B cell (primary cell): ENCODE measurements at regions of chr6 and their contacts with region 1.

Region 1: GRCh38 chr6:18155150-18155863 is at the start of gene KDM1B:
- DNase-seq: peak; percentile 99
- ATAC-seq: peak; percentile 92
- H3K4me3 ChIP-seq: peak within 1 kb of the TSS; percentile 75 to 99 (median 89)
- H3K4me3 Mint-ChIP-seq: peak within 1 kb of the TSS; percentile 99
- H3K27ac ChIP-seq: peak within 1 kb of the TSS; percentile 83 to 87
- H3K27ac Mint-ChIP-seq: peak within 1 kb of the TSS; percentile 98
- H3K4me1 ChIP-seq: peaks cover 25 to 29% of the 10 kb centered on the region in 2 donors
- H3K4me1 Mint-ChIP-seq: peaks cover 24% of the 10 kb centered on the region
- H3K27me3 ChIP-seq: no peaks in the 10 kb centered on the region
- H3K27me3 Mint-ChIP-seq: no peaks in the 10 kb centered on the region
- CTCF ChIP-seq: no peak
- total RNA-seq, gene KDM1B: 10.0 and 10.9 TPM in 2 replicates

Region 2: GRCh38 chr6:17599885-17600526 is 555.3 kb before region 1 on chr6 and contains the start of gene FAM8A1:
- CTCF ChIA-PET with region 1: no interaction called
- POLR2A ChIA-PET with region 1: interaction called, 5 read pairs
- intact Hi-C with region 1: loop called (anchors 1 kb)
- DNase-seq: peak; percentile 93
- ATAC-seq: peak; percentile 90
- H3K4me3 ChIP-seq: peak within 1 kb of the TSS; percentile 51 to 84 (median 79)
- H3K4me3 Mint-ChIP-seq: peak within 1 kb of the TSS; percentile 91
- H3K27ac ChIP-seq: peak within 1 kb of the TSS; percentile 54 to 74
- H3K27ac Mint-ChIP-seq: peak within 1 kb of the TSS; percentile 86
- H3K4me1 ChIP-seq: peaks cover 13% of the 10 kb centered on the region in 2 donors
- H3K4me1 Mint-ChIP-seq: peaks cover 10% of the 10 kb centered on the region
- H3K27me3 ChIP-seq: no peaks in the 10 kb centered on the region
- H3K27me3 Mint-ChIP-seq: no peaks in the 10 kb centered on the region
- CTCF ChIP-seq: peak; percentile 41
- total RNA-seq, gene FAM8A1: 5.2 and 7.0 TPM in 2 replicates

Region 3: DNA sequence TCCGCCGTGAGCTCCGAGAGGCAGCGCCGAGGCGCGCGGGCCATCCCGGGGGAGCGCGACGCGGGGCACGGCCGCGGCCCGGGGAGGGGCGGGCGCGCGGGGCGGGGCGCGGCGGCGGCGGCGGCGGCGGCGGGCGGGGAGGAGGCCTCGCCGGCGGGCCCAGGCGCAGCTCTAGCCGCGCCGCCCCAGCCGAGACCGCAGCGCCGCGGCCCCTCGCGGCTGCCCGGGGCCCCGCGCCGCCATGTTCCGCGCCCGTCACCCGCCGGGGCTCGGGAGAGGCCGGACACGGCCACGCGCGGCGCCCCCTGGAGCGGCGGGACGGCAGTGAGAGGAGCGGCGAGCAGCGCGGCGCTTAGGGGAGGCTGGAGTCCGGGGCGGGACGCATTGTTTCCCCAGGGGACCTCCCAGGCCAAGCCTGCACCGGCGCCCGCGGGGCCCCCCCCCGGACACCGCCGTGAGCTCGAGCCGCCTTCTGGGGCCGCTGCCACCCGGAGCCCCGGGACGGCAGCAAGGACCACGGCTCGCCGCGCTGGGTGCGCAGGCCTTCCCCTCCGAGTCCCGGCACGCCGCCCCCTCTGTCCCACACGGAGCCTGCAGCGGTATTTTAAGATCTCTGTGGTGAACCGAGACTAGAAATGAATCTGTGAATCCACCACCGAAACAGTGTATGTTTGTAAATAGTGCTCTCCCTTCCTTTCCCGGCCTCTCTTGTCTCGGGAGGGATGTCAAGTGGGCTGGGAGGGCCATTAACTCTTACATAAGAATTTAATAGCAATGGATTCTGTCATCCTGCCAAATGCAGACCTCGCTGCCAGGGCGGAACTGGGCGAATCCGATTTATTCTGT is 167.5 kb before region 1 on chr6 and contains the start of gene KIF13A:
- CTCF ChIA-PET with region 1: no interaction called
- POLR2A ChIA-PET with region 1: no interaction called
- intact Hi-C with region 1: loop called (anchors 1 kb)
- DNase-seq: peak; percentile 81
- ATAC-seq: peak; percentile 74
- H3K4me3 ChIP-seq: peak within 1 kb of the TSS; percentile 41 to 85 (median 63)
- H3K4me3 Mint-ChIP-seq: peak within 1 kb of the TSS; percentile 97
- H3K27ac ChIP-seq: peak within 1 kb of the TSS in 1 of 2 donors; percentile 58
- H3K27ac Mint-ChIP-seq: peak within 1 kb of the TSS; percentile 92
- H3K4me1 ChIP-seq: peaks cover 19 to 23% of the 10 kb centered on the region in 2 donors
- H3K4me1 Mint-ChIP-seq: peaks cover 40% of the 10 kb centered on the region
- H3K27me3 ChIP-seq: peaks cover 0 to 13% (median 5%) of the 10 kb centered on the region in 4 experiments
- H3K27me3 Mint-ChIP-seq: no peaks in the 10 kb centered on the region
- CTCF ChIP-seq: peak; percentile 35
- total RNA-seq, gene KIF13A: 21.3 and 23.4 TPM in 2 replicates

Region 4: DNA sequence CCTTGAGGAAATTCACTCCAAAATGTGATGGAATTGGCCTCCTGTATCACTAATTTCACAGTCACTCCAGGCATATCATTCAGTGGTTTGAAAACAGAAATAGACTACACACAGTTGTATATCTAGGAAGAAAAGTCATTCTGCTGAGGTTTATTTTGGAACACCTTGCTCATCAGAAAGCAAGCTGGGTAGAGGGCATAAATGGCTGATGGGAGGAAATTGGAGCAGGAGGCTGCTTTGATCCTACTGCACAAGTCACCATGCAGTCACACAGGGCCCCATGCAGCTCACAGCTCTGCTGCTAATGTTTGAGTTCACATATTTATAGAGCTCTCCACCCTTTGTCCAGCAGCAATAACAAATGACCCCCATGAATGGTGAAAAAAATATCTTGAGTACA is 45.1 kb before region 1 on chr6:
- CTCF ChIA-PET with region 1: no interaction called
- POLR2A ChIA-PET with region 1: no interaction called
- intact Hi-C with region 1: no loop called
- DNase-seq: no peak
- ATAC-seq: no peak
- H3K4me3 ChIP-seq: no peak overlapping the region
- H3K4me3 Mint-ChIP-seq: no peak overlapping the region
- H3K27ac ChIP-seq: no peak overlapping the region
- H3K27ac Mint-ChIP-seq: no peak overlapping the region
- H3K4me1 ChIP-seq: no peaks in the 10 kb centered on the region
- H3K4me1 Mint-ChIP-seq: no peaks in the 10 kb centered on the region
- H3K27me3 ChIP-seq: no peaks in the 10 kb centered on the region
- H3K27me3 Mint-ChIP-seq: peaks cover 4% of the 10 kb centered on the region
- CTCF ChIP-seq: no peak

Region 5: DNA sequence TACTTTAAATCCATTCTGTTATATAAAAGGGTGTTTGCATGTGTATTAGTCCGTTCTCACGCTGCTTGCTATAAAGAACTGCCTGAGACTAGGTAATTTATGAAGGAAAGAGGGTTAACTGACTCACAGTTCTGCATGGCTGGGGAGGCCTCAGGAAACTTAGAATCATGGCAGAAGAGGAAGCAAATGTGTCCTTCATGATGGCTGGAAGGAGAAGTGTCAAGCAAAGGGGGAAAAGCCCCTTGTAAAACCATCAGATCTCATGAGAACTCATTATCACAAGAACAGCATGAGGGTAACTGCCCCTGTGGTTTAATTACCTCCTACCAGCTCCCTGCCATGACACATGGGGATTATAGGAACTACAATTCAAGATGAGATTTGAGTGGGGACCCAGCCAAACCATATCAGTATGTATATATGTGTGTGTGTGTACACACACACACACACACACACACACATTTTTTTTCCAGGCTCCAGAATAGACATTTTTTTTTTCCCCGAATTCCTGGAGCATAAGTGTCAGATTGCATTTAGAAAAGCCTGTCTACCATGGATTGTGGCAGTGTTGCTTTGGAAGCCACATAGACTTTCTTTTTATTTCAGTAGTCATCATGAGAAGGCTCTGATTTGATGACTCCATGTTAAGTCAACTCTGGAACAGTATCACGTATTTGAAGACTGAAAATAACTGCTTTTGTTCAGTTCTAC is 31.4 kb after region 1 on chr6:
- CTCF ChIA-PET with region 1: no interaction called
- POLR2A ChIA-PET with region 1: no interaction called
- intact Hi-C with region 1: no loop called
- DNase-seq: peak; percentile 23
- ATAC-seq: peak; percentile 28
- H3K4me3 ChIP-seq: no peak overlapping the region
- H3K4me3 Mint-ChIP-seq: no peak overlapping the region
- H3K27ac ChIP-seq: peak overlapping the region in 1 of 2 donors; percentile 42
- H3K27ac Mint-ChIP-seq: peak overlapping the region; percentile 42
- H3K4me1 ChIP-seq: peaks cover 12% of the 10 kb centered on the region in 2 donors
- H3K4me1 Mint-ChIP-seq: peaks cover 18% of the 10 kb centered on the region
- H3K27me3 ChIP-seq: no peaks in the 10 kb centered on the region
- H3K27me3 Mint-ChIP-seq: no peaks in the 10 kb centered on the region
- CTCF ChIP-seq: no peak

Region 6: DNA sequence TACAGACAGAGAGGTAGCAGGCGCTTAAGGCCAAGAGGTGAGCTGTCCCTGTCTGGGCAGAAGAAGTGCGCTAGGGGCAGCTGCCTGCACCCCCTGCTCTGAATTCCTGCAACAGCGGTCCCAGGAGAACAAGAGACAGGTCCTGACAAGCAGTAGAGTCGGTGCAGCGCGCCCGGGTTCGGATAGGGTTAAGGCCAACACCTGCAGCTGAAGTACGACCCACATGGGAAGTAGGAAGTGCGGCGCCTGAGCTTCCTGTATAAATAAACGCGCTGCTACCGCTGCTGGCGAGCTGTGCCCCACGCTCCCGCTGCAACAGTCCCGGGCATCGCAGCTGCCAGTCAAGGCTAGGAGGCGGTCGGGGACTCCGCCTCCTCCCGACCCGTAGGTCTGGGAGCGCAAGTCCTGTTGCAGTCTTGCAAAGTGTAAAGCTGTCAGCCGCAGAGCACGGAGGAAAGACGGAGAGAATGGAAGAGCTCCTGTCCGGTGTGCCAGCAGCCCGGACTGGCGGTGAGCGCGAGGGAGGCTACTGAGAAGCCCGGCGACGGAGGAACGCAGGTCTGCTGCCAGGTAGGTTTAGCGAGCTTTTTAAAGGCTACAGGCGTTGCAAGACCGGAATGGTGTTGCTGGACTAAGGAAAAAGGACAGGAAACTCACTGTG is 231.9 kb after region 1 on chr6 and contains the start of gene RNF144B:
- CTCF ChIA-PET with region 1: no interaction called
- POLR2A ChIA-PET with region 1: no interaction called
- intact Hi-C with region 1: loop called (anchors 5 kb)
- DNase-seq: peak; percentile 84
- ATAC-seq: peak; percentile 95
- H3K4me3 ChIP-seq: peak within 1 kb of the TSS; percentile 72 to 100 (median 92)
- H3K4me3 Mint-ChIP-seq: peak within 1 kb of the TSS; percentile 99
- H3K27ac ChIP-seq: peak within 1 kb of the TSS; percentile 60 to 77
- H3K27ac Mint-ChIP-seq: peak within 1 kb of the TSS; percentile 95
- H3K4me1 ChIP-seq: peaks cover 32 to 35% of the 10 kb centered on the region in 2 donors
- H3K4me1 Mint-ChIP-seq: peaks cover 56% of the 10 kb centered on the region
- H3K27me3 ChIP-seq: no peaks in the 10 kb centered on the region
- H3K27me3 Mint-ChIP-seq: no peaks in the 10 kb centered on the region
- CTCF ChIP-seq: no peak
- total RNA-seq, gene RNF144B: 17.0 and 21.4 TPM in 2 replicates

Region 7: GRCh38 chr6:18400831-18401446 is 245.6 kb after region 1 on chr6:
- CTCF ChIA-PET with region 1: no interaction called
- POLR2A ChIA-PET with region 1: no interaction called
- intact Hi-C with region 1: loop called (anchors 1 kb)
- DNase-seq: peak; percentile 73
- ATAC-seq: peak; percentile 90
- H3K4me3 ChIP-seq: peak overlapping the region in 2 of 5 experiments; percentile 7 to 11
- H3K4me3 Mint-ChIP-seq: peak overlapping the region; percentile 70
- H3K27ac ChIP-seq: peak overlapping the region; percentile 54 to 84
- H3K27ac Mint-ChIP-seq: peak overlapping the region; percentile 90
- H3K4me1 ChIP-seq: peaks cover 23 to 39% of the 10 kb centered on the region in 2 donors
- H3K4me1 Mint-ChIP-seq: peaks cover 40% of the 10 kb centered on the region
- H3K27me3 ChIP-seq: no peaks in the 10 kb centered on the region
- H3K27me3 Mint-ChIP-seq: no peaks in the 10 kb centered on the region
- CTCF ChIP-seq: no peak

Region 8: GRCh38 chr6:18415671-18416340 is 260.5 kb after region 1 on chr6:
- CTCF ChIA-PET with region 1: no interaction called
- POLR2A ChIA-PET with region 1: no interaction called
- intact Hi-C with region 1: no loop called
- DNase-seq: no peak
- ATAC-seq: no peak
- H3K4me3 ChIP-seq: no peak overlapping the region
- H3K4me3 Mint-ChIP-seq: no peak overlapping the region
- H3K27ac ChIP-seq: no peak overlapping the region
- H3K27ac Mint-ChIP-seq: no peak overlapping the region
- H3K4me1 ChIP-seq: peaks cover 17 to 18% of the 10 kb centered on the region in 2 donors
- H3K4me1 Mint-ChIP-seq: peaks cover 42% of the 10 kb centered on the region
- H3K27me3 ChIP-seq: no peaks in the 10 kb centered on the region
- H3K27me3 Mint-ChIP-seq: no peaks in the 10 kb centered on the region
- CTCF ChIP-seq: no peak

Region 9: GRCh38 chr6:19059102-19059501 is 903.8 kb after region 1 on chr6:
- CTCF ChIA-PET with region 1: no interaction called
- POLR2A ChIA-PET with region 1: no interaction called
- intact Hi-C with region 1: no loop called
- DNase-seq: no peak
- ATAC-seq: no peak
- H3K4me3 ChIP-seq: no peak overlapping the region
- H3K4me3 Mint-ChIP-seq: no peak overlapping the region
- H3K27ac ChIP-seq: no peak overlapping the region
- H3K27ac Mint-ChIP-seq: no peak overlapping the region
- H3K4me1 ChIP-seq: no peaks in the 10 kb centered on the region
- H3K4me1 Mint-ChIP-seq: no peaks in the 10 kb centered on the region
- H3K27me3 ChIP-seq: no peaks in the 10 kb centered on the region
- H3K27me3 Mint-ChIP-seq: no peaks in the 10 kb centered on the region
- CTCF ChIP-seq: no peak